ENCODE measurements at regions of chr2 and their contacts with region 1.

Region 1: DNA sequence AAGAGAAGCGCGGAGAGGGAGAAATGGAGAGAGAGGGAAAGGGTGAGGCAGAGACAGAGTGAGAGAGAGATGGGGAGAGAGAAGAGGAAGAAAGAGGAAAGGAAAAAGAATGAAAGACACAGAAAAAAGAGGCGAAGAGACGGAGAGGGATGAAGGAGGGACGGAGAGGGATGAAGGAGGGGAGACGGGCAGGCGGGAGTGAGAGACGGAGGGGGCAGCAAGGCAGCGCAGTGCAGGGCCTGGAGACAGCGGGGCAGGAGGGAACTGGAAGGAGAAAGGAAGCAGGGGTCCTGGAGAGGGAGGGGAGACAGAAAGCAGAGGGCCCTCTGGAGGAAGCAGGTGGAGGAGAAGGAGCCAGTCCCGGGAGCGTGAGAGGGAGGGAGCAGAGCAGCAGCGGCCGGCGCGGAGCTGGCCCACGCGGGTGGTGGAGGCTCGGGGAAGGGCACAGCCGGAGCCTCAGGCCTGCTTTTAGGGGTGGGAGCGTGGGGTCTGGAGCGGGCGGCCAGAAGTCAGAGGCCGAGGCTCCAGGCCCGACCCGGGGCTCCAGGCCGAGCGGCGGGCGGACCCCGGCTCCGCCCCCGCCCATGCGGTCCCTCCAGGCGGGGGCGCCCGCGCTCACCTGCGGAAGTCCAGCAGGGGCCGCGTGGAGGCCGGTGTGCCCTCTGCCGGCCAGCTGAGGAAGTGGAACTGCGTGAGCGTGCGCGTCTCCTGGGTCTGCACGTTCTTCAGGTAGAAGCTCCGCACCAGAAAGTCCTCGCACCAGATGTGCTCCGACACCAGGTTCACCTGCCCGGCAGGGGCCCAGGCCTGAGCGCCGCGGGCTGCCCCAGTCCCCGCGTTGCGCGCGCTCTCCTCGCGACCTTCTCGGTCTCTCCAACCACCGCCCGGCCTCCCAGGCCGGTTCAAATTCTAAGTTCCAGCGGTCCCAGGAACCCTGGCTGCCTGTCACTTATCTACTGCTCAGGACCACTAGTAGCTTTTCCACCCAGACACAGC is 14.5 kb downstream of the PTPRN start:
- DNase-seq: peak; percentile 100
- H3K4me3 ChIP-seq: peak overlapping the region; percentile 37 to 51; a peak in 3 of 4 replicates
- H3K27ac ChIP-seq: peak overlapping the region in 1 of 2 experiments; percentile 18; a peak in 1 of 4 replicates
- H3K4me1 ChIP-seq: peaks cover under 1 to 8% of the 10 kb centered on the region in 2 experiments; a peak in 1 of 4 replicates
- H3K27me3 ChIP-seq: no peaks in the 10 kb centered on the region
- CTCF ChIP-seq: peak; percentile 84
- EP300 ChIP-seq: no peak
- RAD21 ChIP-seq: peak; percentile 72

Region 2: DNA sequence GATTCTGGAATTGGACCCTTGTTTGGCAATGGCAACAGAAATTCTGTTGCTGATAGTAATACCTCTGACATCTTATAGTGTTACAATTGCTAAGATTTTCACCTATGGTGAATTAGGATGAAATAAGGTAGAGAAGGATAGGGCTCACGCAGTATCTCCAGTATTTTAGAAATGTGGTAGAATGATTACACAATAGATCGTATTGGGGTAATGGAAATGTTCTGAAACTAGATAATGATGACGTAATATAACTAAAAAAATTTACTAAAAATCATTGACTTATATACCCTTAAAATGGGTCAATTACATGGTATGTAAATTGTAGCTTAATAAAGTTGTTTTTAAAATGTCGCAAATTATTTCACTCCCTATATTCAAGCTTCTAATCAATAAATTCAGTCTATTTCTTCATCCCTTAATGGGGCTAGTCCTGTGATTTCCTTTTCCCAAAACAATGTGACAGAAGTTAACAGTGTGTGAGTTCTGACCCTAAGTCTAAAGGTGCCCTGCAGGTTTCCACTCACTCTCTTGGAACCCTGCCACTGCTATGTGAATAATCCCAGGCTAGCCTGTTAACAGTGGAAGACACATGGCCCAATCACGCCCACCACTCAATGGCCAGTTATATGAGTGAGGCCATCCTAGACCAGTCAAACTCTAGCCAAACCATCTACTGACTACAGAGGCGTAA is 757.7 kb before region 1 on chr2:
- CTCF ChIA-PET with region 1: no interaction called
- POLR2A ChIA-PET with region 1: no interaction called
- DNase-seq: no peak
- H3K4me3 ChIP-seq: no peak overlapping the region
- H3K27ac ChIP-seq: no peak overlapping the region
- H3K4me1 ChIP-seq: no peaks in the 10 kb centered on the region
- H3K27me3 ChIP-seq: no peaks in the 10 kb centered on the region
- CTCF ChIP-seq: no peak
- EP300 ChIP-seq: no peak
- RAD21 ChIP-seq: no peak

Region 3: DNA sequence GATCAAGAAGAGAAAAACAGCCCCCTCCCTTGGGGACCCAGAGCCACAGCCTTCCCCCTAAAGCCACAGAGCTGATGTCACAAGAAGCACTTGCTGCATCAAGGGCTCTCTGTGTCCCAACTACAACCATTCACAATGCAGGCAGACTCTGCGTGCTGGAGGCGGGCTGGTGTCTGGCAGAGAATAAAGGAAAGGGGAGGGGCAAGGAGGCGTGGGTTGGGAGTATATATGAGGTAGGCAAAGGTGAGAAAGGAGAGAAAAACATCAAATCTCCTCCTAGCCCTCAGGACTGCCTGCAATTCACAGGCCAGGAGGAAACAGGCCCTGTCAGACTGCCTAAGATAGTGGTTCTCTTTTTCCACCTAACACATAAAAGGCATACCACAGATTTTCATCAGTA is 185.2 kb before region 1 on chr2:
- CTCF ChIA-PET with region 1: no interaction called
- POLR2A ChIA-PET with region 1: no interaction called
- DNase-seq: no peak
- H3K4me3 ChIP-seq: no peak overlapping the region
- H3K27ac ChIP-seq: no peak overlapping the region
- H3K4me1 ChIP-seq: no peaks in the 10 kb centered on the region
- H3K27me3 ChIP-seq: no peaks in the 10 kb centered on the region
- CTCF ChIP-seq: no peak
- EP300 ChIP-seq: no peak
- RAD21 ChIP-seq: no peak

Region 4: DNA sequence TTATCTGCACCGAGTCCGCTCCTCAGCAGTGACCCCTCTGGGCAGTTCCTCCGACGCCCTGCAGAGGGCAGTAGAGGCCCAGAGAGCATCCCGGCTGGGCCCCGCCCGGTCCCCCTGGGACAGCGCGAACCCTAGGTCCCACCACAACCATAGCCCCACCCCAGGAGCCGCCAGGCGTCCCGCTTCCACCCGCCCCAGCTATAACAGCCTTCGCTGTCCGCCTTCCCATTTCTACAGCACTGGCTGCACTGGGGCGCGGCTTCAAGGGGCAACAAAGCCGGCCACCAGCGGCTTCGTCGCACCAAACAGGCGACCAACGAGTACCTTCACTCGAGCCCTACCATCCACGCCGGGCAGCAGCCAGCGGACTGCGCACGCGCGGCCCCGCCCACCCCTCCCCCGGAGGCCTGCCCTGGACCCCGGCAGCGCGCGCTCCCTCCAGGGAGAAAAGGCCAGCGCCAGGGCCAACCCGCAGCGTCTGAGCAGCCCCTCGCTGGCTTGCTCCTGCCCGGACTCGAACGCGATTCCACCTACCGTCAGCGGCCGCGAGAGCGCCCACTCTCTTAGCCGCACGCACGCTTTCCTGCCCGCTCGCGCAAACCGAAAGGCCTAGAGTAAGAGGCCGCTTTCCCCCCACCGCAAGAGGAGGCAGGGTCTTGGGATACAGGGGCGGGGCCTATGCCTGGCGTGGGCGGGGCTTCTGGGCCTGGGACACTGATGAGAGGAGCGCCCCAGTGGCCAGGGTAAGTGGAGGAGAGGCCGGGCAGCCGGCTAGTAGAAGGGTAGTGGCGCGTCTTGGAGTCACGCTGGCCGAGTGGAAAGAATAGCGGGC is 134.3 kb before region 1 on chr2 and contains the start of gene NHEJ1:
- CTCF ChIA-PET with region 1: interaction called, 62 read pairs
- POLR2A ChIA-PET with region 1: no interaction called
- DNase-seq: peak; percentile 98
- H3K4me3 ChIP-seq: peak within 1 kb of the TSS; percentile 69 to 75
- H3K27ac ChIP-seq: peak within 1 kb of the TSS; percentile 90 to 99
- H3K4me1 ChIP-seq: peaks cover 0 to 11% of the 10 kb centered on the region in 2 experiments; a peak in 1 of 4 replicates
- H3K27me3 ChIP-seq: no peaks in the 10 kb centered on the region
- CTCF ChIP-seq: peak; percentile 96
- EP300 ChIP-seq: no peak
- RAD21 ChIP-seq: peak; percentile 81
- polyA plus RNA-seq, gene NHEJ1: 16.3 and 21.0 TPM in 2 replicates

Region 5: GRCh38 chr2:219229305-219230058 is 65.2 kb before region 1 on chr2 and contains the starts of genes ANKZF1 and ATG9A:
- CTCF ChIA-PET with region 1: interaction called, 40 read pairs
- POLR2A ChIA-PET with region 1: no interaction called
- DNase-seq: peak; percentile 98
- H3K4me3 ChIP-seq: peak within 1 kb of the TSS; percentile 82 to 87
- H3K27ac ChIP-seq: peak within 1 kb of the TSS; percentile 74 to 77
- H3K4me1 ChIP-seq: peaks cover 3 to 16% of the 10 kb centered on the region in 2 experiments; a peak in 1 of 4 replicates
- H3K27me3 ChIP-seq: no peaks in the 10 kb centered on the region
- CTCF ChIP-seq: no peak
- EP300 ChIP-seq: no peak
- RAD21 ChIP-seq: no peak
- polyA plus RNA-seq, gene ANKZF1: 22.3 and 30.8 TPM in 2 replicates
- polyA plus RNA-seq, gene ATG9A: 29.6 and 33.2 TPM in 2 replicates

Region 6: DNA sequence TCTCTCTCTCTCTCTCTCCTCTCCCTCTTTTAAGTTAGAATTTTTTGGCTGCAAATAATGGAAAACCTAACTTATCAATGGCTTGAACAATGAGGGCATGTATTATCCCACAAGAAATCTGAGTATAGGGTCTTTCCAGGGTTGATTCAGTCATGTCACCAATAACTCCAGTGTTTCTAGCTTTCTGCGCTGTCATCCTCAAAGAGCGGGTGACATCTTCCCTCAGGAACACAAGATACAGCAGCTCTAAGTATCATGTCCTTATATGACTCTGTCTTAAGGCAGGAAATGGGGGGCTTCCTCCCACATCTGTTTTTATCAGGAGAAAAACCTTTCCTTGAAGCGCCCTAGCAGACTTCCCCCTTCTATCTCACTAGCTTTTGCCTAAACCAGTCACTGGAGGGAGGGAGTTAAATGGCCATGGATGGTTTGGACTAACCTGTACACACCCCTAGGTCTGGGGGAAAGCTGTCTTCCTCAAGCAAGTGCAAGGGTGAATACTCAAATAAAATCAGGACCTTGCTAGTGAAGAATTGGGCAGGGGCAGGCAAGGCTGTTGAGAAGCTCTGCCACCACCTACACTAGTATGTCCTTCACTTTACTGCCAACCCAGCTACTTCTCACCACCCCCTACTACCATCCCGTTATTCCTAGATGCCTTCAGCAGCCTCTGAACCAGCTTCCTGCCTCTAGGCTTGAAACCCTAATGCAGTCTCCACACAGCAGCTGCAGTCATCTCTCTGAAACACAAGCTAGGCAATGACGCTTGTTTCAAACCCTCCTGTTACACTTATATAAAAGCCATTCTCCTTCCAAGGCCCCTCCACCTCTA is 33.4 kb before region 1 on chr2:
- CTCF ChIA-PET with region 1: interaction called, 44 read pairs
- POLR2A ChIA-PET with region 1: no interaction called
- DNase-seq: no peak
- H3K4me3 ChIP-seq: no peak overlapping the region
- H3K27ac ChIP-seq: no peak overlapping the region
- H3K4me1 ChIP-seq: no peaks in the 10 kb centered on the region
- H3K27me3 ChIP-seq: peaks cover 28% of the 10 kb centered on the region; the same call in 1 of the 2 replicates
- CTCF ChIP-seq: no peak
- EP300 ChIP-seq: no peak
- RAD21 ChIP-seq: no peak

Region 7: DNA sequence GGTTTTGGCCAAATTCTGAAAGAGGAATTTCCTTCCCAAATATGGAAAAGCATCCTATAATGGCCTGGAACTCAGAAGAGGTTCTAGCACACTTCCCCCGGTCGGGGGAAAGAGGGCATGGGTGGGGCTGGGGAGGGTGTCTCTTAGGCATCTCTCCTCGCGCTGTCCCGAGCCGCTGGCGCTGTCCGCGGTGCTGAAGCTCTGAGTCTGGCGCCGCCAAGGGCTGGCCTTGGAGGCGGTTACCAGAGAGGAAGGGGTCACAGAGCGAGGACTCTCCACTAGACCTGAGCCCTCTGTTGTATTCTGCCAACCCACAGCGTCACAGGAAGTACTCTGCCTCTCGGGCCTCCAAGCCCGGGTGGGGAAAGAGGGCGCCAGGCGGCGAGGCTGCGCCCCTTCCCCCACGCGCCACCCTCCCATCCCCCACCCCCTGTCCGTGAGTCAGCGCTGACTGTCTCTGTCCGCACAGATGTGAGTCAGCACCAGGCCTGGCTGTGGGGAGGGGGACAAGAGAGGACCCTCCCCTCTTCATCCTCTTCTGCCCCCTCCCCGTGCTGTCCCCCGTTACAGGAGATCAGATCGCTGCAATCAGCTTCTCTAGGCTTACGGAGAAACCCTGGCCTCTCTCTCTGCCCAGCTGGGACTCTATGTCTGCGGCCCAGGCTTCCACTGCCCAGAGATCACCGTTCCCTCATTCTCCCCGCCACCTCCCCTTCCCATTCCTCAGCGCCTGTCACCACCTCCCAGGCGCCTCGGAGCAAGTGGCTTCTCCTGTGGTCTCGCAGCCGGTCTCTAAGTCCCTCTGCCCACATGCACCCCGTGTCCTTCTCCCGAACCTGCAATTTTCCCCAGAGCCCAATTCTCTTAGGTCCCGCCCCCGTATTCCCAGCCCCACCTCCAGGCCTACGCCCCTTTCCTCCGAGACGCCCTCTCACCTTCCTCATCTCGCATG is 13.8 kb after region 1 on chr2:
- CTCF ChIA-PET with region 1: interaction called, 42 read pairs
- POLR2A ChIA-PET with region 1: interaction called, 4 read pairs
- DNase-seq: peak; percentile 84
- H3K4me3 ChIP-seq: peak overlapping the region; percentile 52 to 73
- H3K27ac ChIP-seq: peak overlapping the region; percentile 77
- H3K4me1 ChIP-seq: peaks cover 0 to 7% of the 10 kb centered on the region in 2 experiments; a peak in 2 of 4 replicates
- H3K27me3 ChIP-seq: no peaks in the 10 kb centered on the region
- CTCF ChIP-seq: 0 out of 2 replicates have a peak, but pooled peaks have one; percentile 12
- EP300 ChIP-seq: no peak; a peak in 1 of 4 replicates
- RAD21 ChIP-seq: no peak

Region 8: DNA sequence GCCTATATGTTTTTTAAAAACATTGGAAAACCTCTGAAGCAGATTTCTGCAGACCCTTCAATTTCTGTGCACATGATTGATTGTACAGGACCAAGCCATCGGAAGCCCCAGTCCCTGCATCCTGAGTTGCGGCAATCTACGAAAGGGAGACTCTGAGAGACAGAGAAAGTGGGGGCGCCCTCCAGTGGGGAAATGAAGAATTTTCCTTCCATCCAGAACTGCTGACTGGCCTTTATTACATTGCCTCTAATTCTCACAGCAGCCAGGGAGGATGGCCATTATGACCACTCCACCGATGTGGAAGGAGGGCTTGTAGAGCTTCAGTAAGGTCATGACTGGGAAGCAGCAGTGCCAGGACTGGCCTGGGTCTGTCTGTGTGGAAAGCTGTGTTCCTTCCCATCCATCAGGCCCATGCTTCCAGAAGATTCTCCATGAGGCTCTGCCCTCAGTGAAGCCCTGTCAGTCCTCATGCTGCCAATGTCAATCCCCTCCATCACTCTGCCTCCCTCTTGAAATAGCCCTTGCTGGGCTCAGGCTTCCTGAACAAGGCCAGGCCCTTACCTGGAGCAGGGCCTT is 57.9 kb after region 1 on chr2:
- CTCF ChIA-PET with region 1: interaction called, 19 read pairs
- POLR2A ChIA-PET with region 1: no interaction called
- DNase-seq: peak; percentile 79
- H3K4me3 ChIP-seq: no peak overlapping the region
- H3K27ac ChIP-seq: no peak overlapping the region
- H3K4me1 ChIP-seq: no peaks in the 10 kb centered on the region
- H3K27me3 ChIP-seq: peaks cover 8% of the 10 kb centered on the region
- CTCF ChIP-seq: peak; percentile 79
- EP300 ChIP-seq: no peak
- RAD21 ChIP-seq: peak; percentile 67

Region 9: DNA sequence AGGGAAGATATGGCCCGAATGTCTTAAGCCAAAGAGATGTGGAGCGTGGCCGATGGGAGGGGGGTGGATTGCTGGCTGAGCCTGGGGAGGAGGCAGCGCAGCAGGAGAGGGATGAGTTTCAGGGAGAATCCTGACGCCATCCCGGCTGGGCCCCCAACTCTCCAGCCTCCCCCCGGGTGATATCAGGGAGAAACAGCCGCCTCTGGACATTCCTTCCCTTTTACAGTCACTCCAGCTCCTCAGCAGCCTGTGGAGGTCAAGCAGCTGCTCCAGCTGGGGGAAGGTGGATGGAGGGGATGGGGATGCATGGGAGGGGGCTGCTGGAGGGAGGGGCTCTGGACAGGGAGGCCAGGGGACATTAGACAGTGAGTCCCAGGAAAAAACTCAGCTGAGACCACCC is 114.0 kb after region 1 on chr2:
- CTCF ChIA-PET with region 1: no interaction called
- POLR2A ChIA-PET with region 1: no interaction called
- DNase-seq: no peak
- H3K4me3 ChIP-seq: no peak overlapping the region
- H3K27ac ChIP-seq: no peak overlapping the region
- H3K4me1 ChIP-seq: peaks cover 3 to 21% of the 10 kb centered on the region in 2 experiments; a peak in 3 of 4 replicates
- H3K27me3 ChIP-seq: no peaks in the 10 kb centered on the region
- CTCF ChIP-seq: no peak
- EP300 ChIP-seq: no peak
- RAD21 ChIP-seq: no peak

Region 10: GRCh38 chr2:219480004-219480403 is 185.3 kb after region 1 on chr2:
- CTCF ChIA-PET with region 1: no interaction called
- POLR2A ChIA-PET with region 1: no interaction called
- DNase-seq: no peak
- H3K4me3 ChIP-seq: no peak overlapping the region
- H3K27ac ChIP-seq: no peak overlapping the region
- H3K4me1 ChIP-seq: peaks cover 0 to 18% of the 10 kb centered on the region in 2 experiments; a peak in 1 of 4 replicates
- H3K27me3 ChIP-seq: no peaks in the 10 kb centered on the region
- CTCF ChIP-seq: no peak
- EP300 ChIP-seq: no peak
- RAD21 ChIP-seq: no peak

Measured in SK-N-SH (cell line).